Mammary epithelial cell (primary cell): ENCODE measurements at regions of chr17 and their contacts with region 1.

Region 1: GRCh38 chr17:28951991-28952975 is 965 bp upstream of the PHF12 start:
- DNase-seq: peak; percentile 99
- H3K4me3 ChIP-seq: peak overlapping the region; percentile 64 to 80 (median 72)
- H3K27ac ChIP-seq: peak overlapping the region; percentile 91
- H3K4me1 ChIP-seq: peaks cover 11% of the 10 kb centered on the region
- H3K27me3 ChIP-seq: no peaks in the 10 kb centered on the region
- CTCF ChIP-seq: no peak

Region 2: GRCh38 chr17:28295677-28296578 is 656.4 kb before region 1 on chr17:
- CTCF ChIA-PET with region 1: no interaction called
- dilution Hi-C with region 1: no loop called
- in situ Hi-C with region 1: no loop called
- intact Hi-C with region 1: no loop called
- DNase-seq: no peak
- H3K4me3 ChIP-seq: no peak overlapping the region
- H3K27ac ChIP-seq: no peak overlapping the region
- H3K4me1 ChIP-seq: no peaks in the 10 kb centered on the region
- H3K27me3 ChIP-seq: peaks cover 2% of the 10 kb centered on the region
- CTCF ChIP-seq: no peak

Region 3: DNA sequence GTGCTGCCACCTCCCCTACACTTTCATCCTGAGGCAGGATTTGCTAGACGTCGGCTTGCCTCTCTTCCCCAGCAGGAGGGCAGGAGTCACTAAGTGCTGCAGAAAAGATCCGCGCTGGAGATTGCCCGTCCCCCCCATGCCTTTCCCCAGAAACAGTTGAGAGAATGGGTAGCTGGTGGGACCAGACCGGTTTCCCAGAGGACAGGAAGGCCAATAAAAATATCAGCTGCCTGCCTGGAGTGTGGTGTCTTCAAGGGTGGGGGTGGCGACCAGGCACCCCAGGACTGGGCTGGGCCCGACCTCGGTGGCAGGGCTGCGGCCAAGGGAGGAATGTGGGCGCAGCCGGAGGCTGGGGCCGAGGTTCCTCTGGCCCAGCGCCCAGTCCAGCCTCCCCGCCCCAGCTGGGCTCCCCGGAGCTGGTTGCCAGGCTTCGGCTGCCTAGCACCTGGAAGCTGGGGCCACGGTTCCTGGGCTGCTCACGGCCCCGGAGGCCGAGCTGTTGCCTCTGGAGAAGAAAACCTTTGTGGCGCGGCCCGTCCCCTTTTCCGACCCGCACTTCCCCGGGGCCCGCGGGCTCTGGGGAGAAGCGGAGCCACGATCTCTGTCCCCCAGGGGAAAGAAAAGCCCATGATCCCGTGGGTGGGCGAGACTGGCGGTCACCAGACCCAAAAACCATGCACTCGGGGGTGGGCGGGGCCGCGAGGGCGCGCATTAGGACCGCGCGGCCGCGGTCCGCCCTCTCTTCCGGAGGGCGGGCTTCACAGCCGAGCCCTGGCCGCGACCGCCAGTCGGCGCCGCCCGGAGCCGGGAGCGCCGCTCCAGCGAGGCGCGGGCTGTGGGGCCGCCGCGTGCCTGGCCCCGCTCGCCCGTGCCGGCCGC is 208.8 kb before region 1 on chr17 and contains the start of gene TRAF4:
- CTCF ChIA-PET with region 1: no interaction called
- dilution Hi-C with region 1: no loop called
- in situ Hi-C with region 1: no loop called
- intact Hi-C with region 1: loop called (anchors 5 kb)
- DNase-seq: peak; percentile 98
- H3K4me3 ChIP-seq: peak within 1 kb of the TSS; percentile 88 to 96 (median 91)
- H3K27ac ChIP-seq: peak within 1 kb of the TSS; percentile 98
- H3K4me1 ChIP-seq: peaks cover 29% of the 10 kb centered on the region
- H3K27me3 ChIP-seq: no peaks in the 10 kb centered on the region
- CTCF ChIP-seq: peak in 1 of 2 donors; percentile 18
- total RNA-seq, gene TRAF4: 50.5 to 147 TPM

Region 4: DNA sequence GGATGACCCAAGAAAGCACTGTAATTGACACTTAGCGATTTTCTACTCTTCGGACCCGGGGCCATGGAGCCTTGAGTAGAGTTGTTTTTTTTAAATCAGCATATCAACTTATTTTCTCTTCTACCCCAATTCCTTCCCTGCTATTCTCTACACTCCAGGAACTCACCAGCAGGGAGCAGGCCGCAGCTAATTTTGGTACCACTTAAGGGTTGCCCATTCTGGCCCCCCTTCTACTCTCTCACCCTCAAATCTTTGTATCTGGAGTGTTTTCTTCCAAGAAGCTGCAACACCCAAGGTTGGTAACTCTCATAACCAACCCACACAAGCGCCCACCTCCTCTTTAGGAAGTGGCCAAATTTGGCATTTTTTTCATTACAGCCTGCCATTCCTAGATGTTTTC is 103.0 kb before region 1 on chr17:
- CTCF ChIA-PET with region 1: no interaction called
- dilution Hi-C with region 1: no loop called
- in situ Hi-C with region 1: no loop called
- intact Hi-C with region 1: loop called (anchors 5 kb)
- DNase-seq: no peak
- H3K4me3 ChIP-seq: no peak overlapping the region
- H3K27ac ChIP-seq: no peak overlapping the region
- H3K4me1 ChIP-seq: peaks cover 2% of the 10 kb centered on the region
- H3K27me3 ChIP-seq: no peaks in the 10 kb centered on the region
- CTCF ChIP-seq: peak; percentile 2 to 14

Region 5: DNA sequence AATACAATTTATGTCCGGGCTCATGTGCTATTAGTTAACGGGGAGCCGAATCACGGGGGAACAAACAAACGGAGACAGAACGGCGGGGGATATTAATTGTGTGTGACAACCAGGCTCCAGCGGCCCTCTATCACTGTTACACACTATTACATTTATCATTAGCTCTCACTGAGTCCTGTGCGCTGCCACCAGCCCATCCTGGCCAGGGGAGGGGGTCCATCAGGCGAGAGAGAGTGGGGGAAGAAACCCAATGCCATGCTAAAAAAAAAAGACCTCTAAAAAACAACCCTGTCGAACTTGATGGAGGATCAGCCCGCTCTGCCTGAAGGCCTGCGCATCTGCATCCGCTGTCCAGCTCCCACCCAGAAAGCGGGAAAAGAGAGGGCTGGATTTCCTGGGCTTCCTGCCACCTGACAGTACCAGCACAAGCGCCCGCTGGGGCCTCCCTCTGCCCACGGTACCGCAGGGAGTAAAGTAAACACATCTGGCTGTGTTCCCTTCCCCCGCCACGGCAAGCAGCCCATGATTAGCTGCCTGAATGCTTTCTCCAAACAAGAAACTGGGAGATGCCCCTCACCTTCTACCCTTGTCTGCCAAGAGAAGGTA is 132.4 kb after region 1 on chr17:
- CTCF ChIA-PET with region 1: no interaction called
- dilution Hi-C with region 1: loop called (anchors 5 kb)
- in situ Hi-C with region 1: no loop called
- intact Hi-C with region 1: no loop called
- DNase-seq: no peak
- H3K4me3 ChIP-seq: no peak overlapping the region
- H3K27ac ChIP-seq: no peak overlapping the region
- H3K4me1 ChIP-seq: no peaks in the 10 kb centered on the region
- H3K27me3 ChIP-seq: no peaks in the 10 kb centered on the region
- CTCF ChIP-seq: no peak

Region 6: DNA sequence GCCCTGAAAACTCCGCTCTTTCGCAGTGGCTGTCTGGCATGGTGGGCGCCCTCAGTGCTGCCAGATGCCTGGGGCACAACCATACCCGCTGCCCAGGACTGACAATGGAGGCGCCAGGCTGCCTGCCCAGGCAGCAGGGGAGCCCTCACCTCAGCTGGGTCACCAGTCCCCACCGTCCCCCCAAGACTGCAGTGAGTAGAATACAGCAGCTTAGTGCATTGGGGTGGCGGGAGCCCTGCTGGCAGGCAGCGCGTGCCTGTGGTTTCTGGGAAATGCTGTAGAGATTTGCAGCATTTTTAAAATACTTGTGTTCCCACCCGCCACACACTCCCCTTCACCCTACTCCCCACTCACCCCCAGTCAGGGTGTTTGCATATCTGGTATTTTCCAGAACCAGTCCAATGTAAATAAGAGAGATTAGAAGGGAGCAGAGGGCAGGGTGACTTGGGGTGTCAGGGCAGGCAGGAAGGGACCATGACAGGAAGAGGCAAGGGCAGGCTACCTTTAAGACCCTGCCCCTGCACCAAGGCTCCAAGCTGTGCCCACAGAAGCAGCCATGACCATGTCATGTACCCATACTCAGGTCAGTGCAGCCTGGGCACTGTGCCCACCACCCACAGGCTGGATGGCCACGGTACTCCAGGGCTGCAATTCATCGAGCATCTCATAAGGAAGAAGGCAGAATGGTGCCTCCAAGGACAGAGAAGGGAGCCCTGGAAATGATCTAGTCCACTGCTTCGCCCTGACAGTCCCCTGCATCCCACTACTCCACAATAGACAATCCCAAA is 206.4 kb after region 1 on chr17:
- CTCF ChIA-PET with region 1: no interaction called
- dilution Hi-C with region 1: no loop called
- in situ Hi-C with region 1: no loop called
- intact Hi-C with region 1: no loop called
- DNase-seq: no peak
- H3K4me3 ChIP-seq: no peak overlapping the region
- H3K27ac ChIP-seq: no peak overlapping the region
- H3K4me1 ChIP-seq: peaks cover 61% of the 10 kb centered on the region
- H3K27me3 ChIP-seq: no peaks in the 10 kb centered on the region
- CTCF ChIP-seq: no peak